Caco-2 (cell line): ENCODE measurements at regions of chr11 and their contacts with region 1.

Region 1: GRCh38 chr11:61967116-61967923 is at the start of gene FTH1:
- DNase-seq: peak; percentile 92 to 96
- H3K4me3 ChIP-seq: peak within 1 kb of the TSS; percentile 92
- H3K4me3 Mint-ChIP-seq: peak within 1 kb of the TSS; percentile 81
- H3K27ac Mint-ChIP-seq: peak within 1 kb of the TSS; percentile 93
- H3K4me1 ChIP-seq: peaks cover 35% of the 10 kb centered on the region
- H3K4me1 Mint-ChIP-seq: peaks cover 39% of the 10 kb centered on the region
- H3K27me3 ChIP-seq: no peaks in the 10 kb centered on the region
- H3K27me3 Mint-ChIP-seq: no peaks in the 10 kb centered on the region
- CTCF ChIP-seq: no peak
- total RNA-seq, gene FTH1: 1,282 and 1,565 TPM in 2 replicates

Region 2: DNA sequence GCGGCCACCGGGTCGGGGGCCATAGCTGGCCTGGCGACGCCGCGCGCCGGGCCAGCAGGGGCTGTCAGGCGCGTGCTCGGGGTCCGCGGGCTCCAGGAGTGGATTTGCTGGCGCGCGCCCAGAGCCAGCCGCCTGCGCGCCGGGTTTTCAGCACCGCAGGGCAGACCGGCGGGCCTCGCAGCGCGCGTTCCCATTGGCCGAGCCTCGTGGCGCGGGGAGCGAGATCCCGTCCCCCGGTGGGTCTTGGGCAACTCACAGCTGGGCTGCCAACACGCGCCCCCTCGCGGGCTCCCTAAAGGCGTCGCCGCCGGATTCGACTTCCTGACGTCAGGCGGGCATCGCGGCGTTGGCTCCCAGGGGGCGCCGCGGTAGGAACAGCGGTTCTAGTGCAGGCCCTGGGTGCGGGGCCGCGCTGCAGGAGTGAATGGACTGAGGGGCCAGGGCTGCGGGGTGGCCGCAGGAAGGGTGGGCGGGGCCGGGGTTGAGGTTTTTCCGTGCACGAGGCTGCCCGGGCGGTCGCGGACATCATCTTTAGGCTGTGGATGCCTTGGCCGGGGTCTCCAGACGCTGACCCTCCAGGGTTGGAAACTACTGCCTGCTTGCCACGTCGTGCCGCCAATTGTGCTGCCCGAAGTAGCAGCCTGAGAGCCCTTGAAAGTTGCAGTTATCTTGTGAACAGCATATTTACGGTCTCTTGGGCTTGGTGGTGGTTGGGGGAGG is 150.4 kb before region 1 on chr11 and contains the start of gene FADS1:
- CTCF ChIA-PET with region 1: no interaction called
- POLR2A ChIA-PET with region 1: interaction called, 12 read pairs
- intact Hi-C with region 1: loop called (anchors 5 kb)
- DNase-seq: peak; percentile 98 to 99
- H3K4me3 ChIP-seq: peak within 1 kb of the TSS; percentile 85
- H3K4me3 Mint-ChIP-seq: peak within 1 kb of the TSS; percentile 81
- H3K27ac Mint-ChIP-seq: peak within 1 kb of the TSS; percentile 90
- H3K4me1 ChIP-seq: peaks cover 16% of the 10 kb centered on the region
- H3K4me1 Mint-ChIP-seq: peaks cover 18% of the 10 kb centered on the region
- H3K27me3 ChIP-seq: no peaks in the 10 kb centered on the region
- H3K27me3 Mint-ChIP-seq: no peaks in the 10 kb centered on the region
- CTCF ChIP-seq: peak; percentile 72 to 95
- total RNA-seq, gene FADS1: 108 and 116 TPM in 2 replicates

Region 3: GRCh38 chr11:61954851-61955421 is 12.4 kb before region 1 on chr11:
- CTCF ChIA-PET with region 1: interaction called, 5 read pairs
- POLR2A ChIA-PET with region 1: interaction called, 36 read pairs
- intact Hi-C with region 1: no loop called
- DNase-seq: peak; percentile 67 to 79
- H3K4me3 ChIP-seq: peak overlapping the region; percentile 43
- H3K4me3 Mint-ChIP-seq: peak overlapping the region; percentile 71
- H3K27ac Mint-ChIP-seq: peak overlapping the region; percentile 66
- H3K4me1 ChIP-seq: peaks cover 11% of the 10 kb centered on the region
- H3K4me1 Mint-ChIP-seq: no peaks in the 10 kb centered on the region
- H3K27me3 ChIP-seq: no peaks in the 10 kb centered on the region
- H3K27me3 Mint-ChIP-seq: no peaks in the 10 kb centered on the region
- CTCF ChIP-seq: peak in 1 of 2 experiments; percentile 37

Region 4: DNA sequence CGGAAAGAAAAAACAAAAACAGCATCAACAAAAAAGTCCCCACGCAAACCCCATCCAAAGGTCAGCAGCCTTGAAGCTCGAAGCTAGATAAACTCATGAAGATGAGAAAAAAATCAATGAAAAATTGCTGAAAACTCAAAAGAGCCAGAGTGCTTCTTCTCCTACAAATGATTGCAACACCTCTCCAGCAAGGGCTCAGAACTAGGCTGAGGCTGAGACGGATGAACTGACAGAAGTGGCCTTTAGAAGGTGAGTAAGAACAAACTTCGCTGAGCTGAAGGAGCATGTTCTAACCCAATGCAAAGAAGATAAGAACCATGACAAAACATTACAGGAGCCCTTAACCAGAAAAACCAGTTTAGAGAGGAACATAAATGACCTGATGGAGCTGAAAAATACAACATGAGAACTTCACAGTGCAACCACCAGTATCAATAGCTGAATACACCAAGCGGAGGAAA is 18.6 kb after region 1 on chr11:
- CTCF ChIA-PET with region 1: no interaction called
- POLR2A ChIA-PET with region 1: interaction called, 25 read pairs
- intact Hi-C with region 1: no loop called
- DNase-seq: peak; percentile 84 to 87
- H3K4me3 ChIP-seq: no peak overlapping the region
- H3K4me3 Mint-ChIP-seq: peak overlapping the region; percentile 52
- H3K27ac Mint-ChIP-seq: peak overlapping the region; percentile 85
- H3K4me1 ChIP-seq: peaks cover 21% of the 10 kb centered on the region
- H3K4me1 Mint-ChIP-seq: peaks cover 14% of the 10 kb centered on the region
- H3K27me3 ChIP-seq: no peaks in the 10 kb centered on the region
- H3K27me3 Mint-ChIP-seq: no peaks in the 10 kb centered on the region
- CTCF ChIP-seq: no peak

Region 5: GRCh38 chr11:62054484-62055121 is 87.3 kb after region 1 on chr11:
- CTCF ChIA-PET with region 1: interaction called, 4 read pairs
- POLR2A ChIA-PET with region 1: interaction called, 9 read pairs
- intact Hi-C with region 1: loop called (anchors 1 kb)
- DNase-seq: peak; percentile 83 to 85
- H3K4me3 ChIP-seq: no peak overlapping the region
- H3K4me3 Mint-ChIP-seq: peak overlapping the region; percentile 25
- H3K27ac Mint-ChIP-seq: peak overlapping the region; percentile 81
- H3K4me1 ChIP-seq: 0 out of 2 replicates have a peak, but pooled peaks cover 5% of the 10 kb centered on the region
- H3K4me1 Mint-ChIP-seq: no peaks in the 10 kb centered on the region
- H3K27me3 ChIP-seq: no peaks in the 10 kb centered on the region; the same call in 1 of the 2 replicates
- H3K27me3 Mint-ChIP-seq: no peaks in the 10 kb centered on the region
- CTCF ChIP-seq: peak; percentile 78 to 93